ENCODE measurements at regions of chr15 and their contacts with region 1.

Region 1: DNA sequence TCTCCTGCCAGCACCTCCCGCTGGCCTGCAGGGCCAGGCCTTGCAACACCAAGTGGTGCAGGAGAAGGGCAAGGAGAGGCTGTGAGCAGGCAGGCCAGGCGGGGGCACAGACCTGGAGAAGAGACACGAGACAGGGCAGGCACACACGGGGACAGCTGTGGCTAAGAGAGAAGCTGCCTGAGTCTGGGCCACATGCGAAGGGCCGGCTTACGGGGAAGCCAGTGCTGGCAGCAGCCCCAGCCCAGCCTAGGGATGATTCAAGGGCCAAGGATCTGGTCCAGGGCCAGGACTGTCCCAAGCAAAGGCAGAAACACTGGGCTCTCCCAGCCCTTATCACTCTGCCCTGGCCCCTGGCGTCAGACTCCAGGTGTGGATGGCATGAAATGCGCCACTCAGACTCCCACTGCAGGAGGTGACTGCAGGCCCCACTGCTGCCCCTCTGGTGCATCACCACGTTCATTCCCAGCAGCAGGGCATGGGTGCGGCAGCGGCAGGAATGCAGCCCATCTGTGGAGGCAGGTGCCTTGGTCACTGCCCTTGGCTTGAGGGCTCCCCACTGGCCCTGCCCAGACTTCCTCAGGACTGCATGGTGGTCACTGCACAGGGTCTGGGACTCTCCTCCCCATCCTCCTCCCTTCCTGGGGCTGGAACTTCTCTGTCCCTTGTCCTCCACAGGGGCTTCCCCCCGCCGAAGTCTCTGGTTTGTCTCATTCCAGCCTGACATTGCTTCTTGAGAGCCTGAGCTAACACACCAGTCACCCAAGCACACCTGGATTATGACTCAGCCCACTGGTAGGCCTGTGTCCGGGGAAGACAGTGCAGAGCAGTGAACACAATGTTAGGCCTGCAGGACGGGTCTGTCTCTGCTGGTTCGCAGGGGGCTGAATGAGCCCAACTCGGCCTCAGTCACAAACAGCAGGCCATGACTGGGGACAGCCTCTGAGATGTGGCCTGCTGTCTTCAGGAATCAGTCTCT is 69.3 kb downstream of the TBC1D2B start:
- DNase-seq: no peak
- ATAC-seq: peak; percentile 35 to 66; a peak in 5 of 6 replicates
- H3K4me3 ChIP-seq: no peak overlapping the region
- H3K27ac ChIP-seq: peak overlapping the region in 1 of 2 experiments; percentile 38; a peak in 3 of 6 replicates
- H3K4me1 ChIP-seq: peaks cover 28% of the 10 kb centered on the region
- CTCF ChIP-seq: no peak
- EP300 ChIP-seq: no peak
- POLR2A ChIP-seq: no peak
- RAD21 ChIP-seq: no peak

Region 2: DNA sequence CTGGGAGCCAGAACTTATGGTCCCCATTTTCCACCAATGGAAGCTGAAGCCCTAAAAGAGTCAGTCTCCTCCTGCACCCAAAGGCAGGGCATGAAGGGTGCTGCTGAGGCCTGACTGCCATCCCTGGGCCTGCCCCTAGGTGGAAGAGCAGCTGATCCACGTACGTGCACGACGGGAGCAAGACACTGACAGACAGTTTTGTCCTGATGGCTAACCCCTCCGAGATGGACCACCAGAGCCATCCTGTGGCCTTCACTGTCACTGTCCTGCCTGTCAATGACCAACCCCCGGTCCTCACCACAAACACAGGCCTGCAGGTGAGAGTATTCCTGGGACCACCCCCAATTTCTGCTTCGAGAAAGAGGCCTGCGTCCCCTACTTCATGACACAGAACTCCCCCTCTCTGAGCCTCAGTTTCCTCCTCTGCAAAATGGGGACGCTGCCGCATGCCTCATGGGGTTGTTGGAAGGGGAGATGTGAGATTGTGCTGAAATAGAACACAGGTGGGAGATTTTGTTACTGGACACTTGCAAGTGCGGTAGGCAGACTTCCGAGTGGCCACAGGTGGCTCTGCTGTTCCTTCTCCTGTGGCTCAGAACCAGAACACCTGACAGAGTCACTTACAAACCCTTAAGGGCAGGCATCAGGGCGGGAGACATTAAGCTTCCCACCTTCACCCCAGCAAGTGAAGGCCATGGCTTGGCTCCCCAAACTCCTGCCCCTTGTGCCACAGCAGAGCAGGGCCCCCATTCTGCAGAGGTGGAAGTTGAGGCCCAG is 106.0 kb before region 1 on chr15:
- CTCF ChIA-PET with region 1: no interaction called
- POLR2A ChIA-PET with region 1: no interaction called
- DNase-seq: peak; percentile 32 to 49
- ATAC-seq: peak; percentile 53 to 76; a peak in 3 of 6 replicates
- H3K4me3 ChIP-seq: no peak overlapping the region
- H3K27ac ChIP-seq: no peak overlapping the region
- H3K4me1 ChIP-seq: no peaks in the 10 kb centered on the region
- CTCF ChIP-seq: no peak
- EP300 ChIP-seq: no peak
- POLR2A ChIP-seq: no peak
- RAD21 ChIP-seq: no peak

Region 3: GRCh38 chr15:78018946-78019644 is 10.9 kb after region 1 on chr15:
- CTCF ChIA-PET with region 1: interaction called, 26 read pairs
- POLR2A ChIA-PET with region 1: no interaction called
- DNase-seq: no peak
- ATAC-seq: no peak
- H3K4me3 ChIP-seq: no peak overlapping the region
- H3K27ac ChIP-seq: no peak overlapping the region; a peak in 1 of 6 replicates
- H3K4me1 ChIP-seq: no peaks in the 10 kb centered on the region
- CTCF ChIP-seq: no peak
- EP300 ChIP-seq: no peak
- POLR2A ChIP-seq: no peak
- RAD21 ChIP-seq: no peak

Region 4: GRCh38 chr15:78247911-78248310 is 239.7 kb after region 1 on chr15:
- CTCF ChIA-PET with region 1: no interaction called
- POLR2A ChIA-PET with region 1: no interaction called
- DNase-seq: no peak
- ATAC-seq: no peak
- H3K4me3 ChIP-seq: no peak overlapping the region
- H3K27ac ChIP-seq: no peak overlapping the region
- H3K4me1 ChIP-seq: no peaks in the 10 kb centered on the region
- CTCF ChIP-seq: no peak
- EP300 ChIP-seq: no peak
- POLR2A ChIP-seq: no peak
- RAD21 ChIP-seq: no peak

Measured in A549 (cell line).